ENCODE measurements at regions of chr12 and their contacts with region 1.

Region 1: DNA sequence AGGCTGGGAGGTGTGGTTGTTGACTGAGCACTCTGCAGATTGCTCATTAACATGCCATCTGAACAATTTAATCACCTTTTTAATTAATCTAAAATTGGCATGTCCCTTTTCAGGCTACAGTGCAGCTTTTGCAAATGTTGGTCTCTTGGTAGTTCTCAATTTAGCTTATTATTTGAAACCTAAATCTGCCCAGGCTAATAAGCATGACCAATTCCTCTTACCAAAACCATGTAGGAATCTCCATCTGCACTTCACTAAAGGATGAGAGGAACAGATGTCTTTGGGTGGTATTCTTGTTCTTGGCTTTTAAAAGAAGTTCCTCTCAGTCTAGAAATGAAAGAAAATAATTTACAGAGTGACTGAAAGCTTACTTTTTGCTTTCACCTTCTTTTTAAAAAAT is 190.1 kb upstream of the RMST start:
- DNase-seq: no peak
- H3K4me3 ChIP-seq: no peak overlapping the region
- CTCF ChIP-seq: no peak
- POLR2A ChIP-seq: no peak

Region 2: GRCh38 chr12:96164951-96165811 is 1107.3 kb before region 1 on chr12:
- intact Hi-C with region 1: no loop called
- DNase-seq: no peak
- H3K4me3 ChIP-seq: no peak overlapping the region
- CTCF ChIP-seq: no peak
- POLR2A ChIP-seq: no peak

Region 3: GRCh38 chr12:97223419-97223818 is 49.1 kb before region 1 on chr12:
- intact Hi-C with region 1: no loop called
- DNase-seq: no peak
- H3K4me3 ChIP-seq: no peak overlapping the region
- CTCF ChIP-seq: no peak
- POLR2A ChIP-seq: no peak

Region 4: GRCh38 chr12:97246368-97246767 is 26.1 kb before region 1 on chr12:
- intact Hi-C with region 1: loop called (anchors 1 kb)
- DNase-seq: no peak
- H3K4me3 ChIP-seq: no peak overlapping the region
- CTCF ChIP-seq: no peak
- POLR2A ChIP-seq: no peak